SK-N-SH (cell line): ENCODE measurements at regions of chr22 and their contacts with region 1.

Region 1: GRCh38 chr22:45263463-45264269 is 21.1 kb upstream of the UPK3A start:
- DNase-seq: peak; percentile 94
- H3K4me3 ChIP-seq: no peak overlapping the region
- H3K27ac ChIP-seq: peak overlapping the region in 1 of 2 experiments; percentile 31; a peak in 3 of 4 replicates
- H3K4me1 ChIP-seq: peaks cover 0 to 12% of the 10 kb centered on the region in 2 experiments; a peak in 1 of 4 replicates
- H3K27me3 ChIP-seq: no peaks in the 10 kb centered on the region
- CTCF ChIP-seq: peak; percentile 72
- EP300 ChIP-seq: peak in 1 of 2 experiments; percentile 14; a peak in 1 of 4 replicates
- RAD21 ChIP-seq: peak; percentile 88

Region 2: GRCh38 chr22:45101515-45102227 is 162.0 kb before region 1 on chr22:
- CTCF ChIA-PET with region 1: interaction called, 13 read pairs
- POLR2A ChIA-PET with region 1: no interaction called
- DNase-seq: peak; percentile 69
- H3K4me3 ChIP-seq: no peak overlapping the region; a peak in 1 of 4 replicates
- H3K27ac ChIP-seq: no peak overlapping the region
- H3K4me1 ChIP-seq: no peaks in the 10 kb centered on the region
- H3K27me3 ChIP-seq: no peaks in the 10 kb centered on the region
- CTCF ChIP-seq: peak; percentile 20; the same call in 1 of the 2 replicates
- EP300 ChIP-seq: no peak
- RAD21 ChIP-seq: peak; percentile 77

Region 3: DNA sequence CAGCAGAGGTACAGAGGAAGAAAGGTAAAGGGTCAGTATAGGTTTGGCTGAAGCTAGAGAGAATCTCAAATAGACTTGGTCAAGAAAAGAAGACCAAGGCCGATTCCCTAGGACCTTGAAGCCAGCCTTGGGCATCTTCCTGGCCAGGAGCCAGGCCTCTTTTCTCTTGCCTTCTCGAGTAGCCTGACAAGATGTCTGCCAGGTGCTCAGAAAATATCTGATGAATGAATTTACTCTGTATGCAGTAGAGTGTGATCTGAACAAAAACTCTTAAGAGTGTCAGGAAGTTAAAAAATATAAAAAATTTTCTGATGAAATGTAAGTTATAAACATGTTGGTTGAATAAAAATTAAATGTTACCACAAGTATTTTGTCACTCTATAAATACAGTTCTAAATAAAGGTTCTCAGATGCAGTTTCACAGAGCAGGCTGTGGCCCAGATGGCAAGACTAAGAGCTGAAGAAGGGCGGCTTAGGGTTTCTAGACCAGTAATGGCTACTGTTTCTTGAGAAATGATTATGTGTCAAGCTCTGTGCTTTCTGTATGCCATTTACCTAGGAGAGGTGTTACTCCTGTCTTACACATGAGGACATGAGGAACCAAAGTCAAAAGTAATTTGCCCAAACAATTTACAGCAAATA is 506.0 kb after region 1 on chr22:
- CTCF ChIA-PET with region 1: no interaction called
- POLR2A ChIA-PET with region 1: no interaction called
- DNase-seq: no peak
- H3K4me3 ChIP-seq: no peak overlapping the region
- H3K27ac ChIP-seq: no peak overlapping the region
- H3K4me1 ChIP-seq: no peaks in the 10 kb centered on the region; a peak in 1 of 4 replicates
- H3K27me3 ChIP-seq: no peaks in the 10 kb centered on the region
- CTCF ChIP-seq: no peak
- EP300 ChIP-seq: no peak
- RAD21 ChIP-seq: no peak